HCT116 (cell line): ENCODE measurements at regions of chr9 and their contacts with region 1.

Region 1: DNA sequence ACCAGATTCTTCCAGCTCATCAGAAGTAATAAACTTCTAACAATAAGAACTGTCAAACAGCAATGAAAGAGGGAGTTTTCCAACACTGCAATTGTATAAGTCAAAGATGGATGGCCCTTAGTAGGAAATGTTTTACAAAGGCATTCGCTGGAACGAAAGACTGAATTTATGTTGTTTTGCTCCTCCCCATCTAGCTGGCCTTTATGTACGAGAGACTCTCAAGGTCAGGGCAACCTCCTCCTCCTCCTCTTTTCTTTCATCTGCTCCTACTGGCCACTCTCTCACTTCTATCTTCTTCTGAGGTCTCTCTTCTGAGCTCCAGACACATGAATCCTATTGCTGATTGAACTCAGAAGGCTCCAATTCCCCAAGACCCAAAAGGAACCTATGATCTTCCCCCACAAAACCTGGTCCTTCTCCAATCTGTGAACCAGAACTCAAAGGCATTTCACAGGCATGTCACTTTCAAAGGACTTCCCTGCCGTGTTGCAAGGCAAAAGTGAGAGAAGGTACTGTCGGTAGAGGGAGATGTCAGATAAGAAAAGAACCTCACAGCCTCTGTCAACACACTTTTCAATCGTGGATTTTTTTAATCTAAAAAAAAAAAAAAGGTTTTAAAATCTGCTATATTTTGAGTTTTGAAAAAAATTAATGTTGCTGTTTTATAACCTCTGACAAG is 28.5 kb upstream of the PUM3 start:
- DNase-seq: peak; percentile 23
- ATAC-seq: peak; percentile 68
- H3K4me3 ChIP-seq: no peak overlapping the region
- H3K27ac ChIP-seq: no peak overlapping the region
- H3K4me1 ChIP-seq: no peaks in the 10 kb centered on the region
- H3K27me3 ChIP-seq: peaks cover 79% of the 10 kb centered on the region
- CTCF ChIP-seq: peak in 2 of 3 experiments; percentile 26 to 29; a peak in 4 of 6 replicates
- POLR2A ChIP-seq: no peak
- RAD21 ChIP-seq: peak; percentile 51

Region 2: GRCh38 chr9:2991292-2991691 is 118.9 kb after region 1 on chr9:
- CTCF ChIA-PET with region 1: no interaction called
- POLR2A ChIA-PET with region 1: no interaction called
- RAD21 ChIA-PET with region 1: no interaction called
- intact Hi-C with region 1: loop called (anchors 5 kb)
- DNase-seq: no peak
- ATAC-seq: no peak
- H3K4me3 ChIP-seq: no peak overlapping the region
- H3K27ac ChIP-seq: no peak overlapping the region
- H3K4me1 ChIP-seq: no peaks in the 10 kb centered on the region
- H3K27me3 ChIP-seq: peaks cover 23% of the 10 kb centered on the region; the same call in 1 of the 2 replicates
- CTCF ChIP-seq: peak in 2 of 3 experiments; percentile 31 to 40; a peak in 3 of 6 replicates
- POLR2A ChIP-seq: no peak
- RAD21 ChIP-seq: peak; percentile 26; the same call in 1 of the 2 replicates

Region 3: GRCh38 chr9:3161665-3162306 is 289.4 kb after region 1 on chr9:
- CTCF ChIA-PET with region 1: no interaction called
- POLR2A ChIA-PET with region 1: no interaction called
- RAD21 ChIA-PET with region 1: no interaction called
- intact Hi-C with region 1: loop called (anchors 5 kb)
- DNase-seq: no peak
- ATAC-seq: no peak
- H3K4me3 ChIP-seq: no peak overlapping the region
- H3K27ac ChIP-seq: no peak overlapping the region
- H3K4me1 ChIP-seq: no peaks in the 10 kb centered on the region
- H3K27me3 ChIP-seq: peaks cover 47% of the 10 kb centered on the region
- CTCF ChIP-seq: no peak
- POLR2A ChIP-seq: no peak
- RAD21 ChIP-seq: no peak

Region 4: GRCh38 chr9:3441197-3441816 is 568.9 kb after region 1 on chr9:
- CTCF ChIA-PET with region 1: interaction called, 3 read pairs
- POLR2A ChIA-PET with region 1: no interaction called
- RAD21 ChIA-PET with region 1: no interaction called
- intact Hi-C with region 1: loop called (anchors 5 kb)
- DNase-seq: peak; percentile 51
- ATAC-seq: peak; percentile 87
- H3K4me3 ChIP-seq: no peak overlapping the region
- H3K27ac ChIP-seq: no peak overlapping the region
- H3K4me1 ChIP-seq: no peaks in the 10 kb centered on the region
- H3K27me3 ChIP-seq: no peaks in the 10 kb centered on the region
- CTCF ChIP-seq: peak; percentile 44 to 65 (median 55); a peak in 5 of 6 replicates
- POLR2A ChIP-seq: no peak
- RAD21 ChIP-seq: peak; percentile 46; the same call in 1 of the 2 replicates

Region 5: DNA sequence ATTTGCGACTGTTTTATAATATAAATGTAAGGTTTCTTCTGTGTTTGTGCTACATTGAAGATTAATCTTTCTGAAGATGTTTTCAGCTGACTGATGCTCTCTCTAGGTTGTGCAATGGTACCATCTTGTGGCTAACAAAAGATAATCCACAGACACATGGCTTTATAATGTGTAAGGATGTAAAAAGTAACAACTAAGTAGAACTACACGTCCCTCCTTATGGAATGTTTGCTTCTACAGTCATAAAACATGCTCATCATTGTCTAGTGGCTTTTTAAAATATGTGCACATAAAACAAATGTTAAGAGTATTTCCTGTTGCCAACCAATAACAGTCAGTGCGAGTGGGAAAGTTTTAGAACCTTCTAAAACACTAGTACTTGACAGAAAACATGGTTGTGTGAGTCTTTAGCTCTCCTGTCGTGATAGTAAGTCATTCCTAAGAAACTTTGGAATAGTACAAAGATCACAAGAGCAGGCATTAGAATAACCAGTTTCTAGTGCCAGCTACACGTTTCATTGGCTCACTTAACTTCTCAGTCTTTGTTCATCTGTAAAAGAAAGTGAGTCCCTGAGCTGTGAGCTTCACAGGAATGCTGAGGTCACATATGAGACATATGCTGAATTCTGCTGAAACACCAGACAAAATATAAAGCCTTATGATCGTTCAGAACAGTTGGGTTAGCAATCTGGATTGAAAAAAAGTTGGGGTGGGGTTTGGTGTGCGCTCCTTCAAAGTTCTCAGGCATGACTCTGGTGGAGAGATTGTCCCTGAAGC is 1503.2 kb after region 1 on chr9:
- CTCF ChIA-PET with region 1: no interaction called
- POLR2A ChIA-PET with region 1: no interaction called
- RAD21 ChIA-PET with region 1: no interaction called
- intact Hi-C with region 1: loop called (anchors 5 kb)
- DNase-seq: peak; percentile 26
- ATAC-seq: peak; percentile 70
- H3K4me3 ChIP-seq: no peak overlapping the region
- H3K27ac ChIP-seq: no peak overlapping the region
- H3K4me1 ChIP-seq: no peaks in the 10 kb centered on the region
- H3K27me3 ChIP-seq: no peaks in the 10 kb centered on the region
- CTCF ChIP-seq: peak; percentile 21 to 60 (median 55); a peak in 4 of 6 replicates
- POLR2A ChIP-seq: no peak
- RAD21 ChIP-seq: peak; percentile 83